SK-N-SH (cell line): ENCODE measurements at regions of chr2 and their contacts with region 1.

Region 1: DNA sequence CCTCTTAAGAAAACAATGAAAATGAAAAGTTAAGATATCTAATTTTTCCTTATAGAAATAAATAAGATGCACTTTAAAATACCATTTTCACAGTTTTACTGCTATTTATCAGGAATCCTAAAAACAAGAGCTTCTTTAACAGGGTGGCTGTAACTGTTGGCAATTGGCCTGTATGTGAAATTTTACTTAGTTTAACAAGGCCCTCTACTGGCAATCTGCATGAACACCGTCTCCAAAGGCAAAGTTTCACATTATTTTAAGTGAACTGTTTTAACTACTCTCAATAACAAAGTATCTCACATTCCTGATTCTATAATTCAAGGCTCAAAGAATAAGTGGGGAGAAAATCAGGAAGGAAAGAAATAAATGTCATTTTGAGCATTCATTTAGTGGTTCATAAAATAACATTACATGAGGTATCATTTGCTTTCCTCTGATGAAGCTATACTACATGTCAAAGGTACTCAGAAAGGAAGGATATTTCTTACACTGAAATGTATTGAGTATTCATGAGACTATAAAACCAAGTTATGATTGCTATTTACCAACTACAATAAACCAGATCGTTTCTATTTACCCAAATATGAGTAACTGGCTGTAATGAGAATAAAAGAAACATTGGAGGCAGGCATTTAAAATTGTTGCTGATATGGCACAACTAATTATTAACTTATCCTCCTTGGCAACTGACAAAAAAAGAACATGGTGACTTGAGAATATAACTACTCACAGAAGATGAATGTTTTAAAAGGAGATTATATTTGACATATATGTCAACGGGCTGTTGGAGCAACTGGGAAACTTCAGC is 7.0 kb downstream of the NCKAP5 start:
- DNase-seq: peak; percentile 41
- H3K4me3 ChIP-seq: no peak overlapping the region; a peak in 1 of 4 replicates
- H3K27ac ChIP-seq: no peak overlapping the region
- H3K4me1 ChIP-seq: peaks cover 0 to 13% of the 10 kb centered on the region in 2 experiments; a peak in 1 of 4 replicates
- H3K27me3 ChIP-seq: no peaks in the 10 kb centered on the region
- CTCF ChIP-seq: peak; percentile 83
- EP300 ChIP-seq: no peak
- RAD21 ChIP-seq: peak; percentile 88

Region 2: DNA sequence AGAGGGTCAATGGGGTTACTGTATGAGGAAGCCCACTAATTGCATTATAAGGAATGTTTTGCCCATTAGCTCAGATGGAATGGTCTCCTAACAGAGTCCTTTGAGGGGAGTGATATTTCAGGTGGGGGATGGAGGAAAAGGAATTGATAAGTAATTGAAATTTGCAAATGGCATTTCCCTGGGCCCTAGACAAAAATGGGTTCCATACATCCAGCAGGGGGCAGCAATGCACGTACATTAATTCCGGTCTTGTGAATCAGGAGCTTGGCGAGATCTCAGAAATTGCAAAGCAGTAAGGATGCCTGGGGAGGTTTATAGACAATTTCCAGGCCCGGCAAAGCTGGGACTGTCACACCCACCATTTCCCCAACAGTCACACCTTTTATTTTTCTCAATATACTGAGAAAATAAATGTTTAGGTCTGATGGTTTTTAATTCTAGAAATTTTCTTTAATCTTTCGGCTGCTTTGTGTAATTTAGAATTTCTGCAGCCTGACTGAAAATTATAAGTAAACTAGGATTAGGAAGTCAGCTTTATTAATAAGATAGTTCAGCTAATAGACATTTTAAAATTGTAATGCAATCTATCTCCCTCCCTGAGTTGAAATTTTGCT is 1014.1 kb before region 1 on chr2:
- CTCF ChIA-PET with region 1: interaction called, 31 read pairs
- POLR2A ChIA-PET with region 1: no interaction called
- DNase-seq: peak; percentile 64
- H3K4me3 ChIP-seq: peak overlapping the region in 1 of 2 experiments; percentile 6; a peak in 1 of 4 replicates
- H3K27ac ChIP-seq: no peak overlapping the region
- H3K4me1 ChIP-seq: peaks cover 0 to 7% of the 10 kb centered on the region in 2 experiments; a peak in 2 of 4 replicates
- H3K27me3 ChIP-seq: no peaks in the 10 kb centered on the region
- CTCF ChIP-seq: peak; percentile 79
- EP300 ChIP-seq: no peak
- RAD21 ChIP-seq: peak; percentile 87

Region 3: GRCh38 chr2:133262888-133263287 is 298.4 kb before region 1 on chr2:
- CTCF ChIA-PET with region 1: interaction called, 14 read pairs
- POLR2A ChIA-PET with region 1: no interaction called
- DNase-seq: no peak
- H3K4me3 ChIP-seq: no peak overlapping the region
- H3K27ac ChIP-seq: no peak overlapping the region
- H3K4me1 ChIP-seq: peaks cover 0 to 14% of the 10 kb centered on the region in 2 experiments; a peak in 2 of 4 replicates
- H3K27me3 ChIP-seq: no peaks in the 10 kb centered on the region
- CTCF ChIP-seq: peak; percentile 48
- EP300 ChIP-seq: no peak
- RAD21 ChIP-seq: peak; percentile 65

Region 4: GRCh38 chr2:133421516-133422312 is 139.5 kb before region 1 on chr2:
- CTCF ChIA-PET with region 1: interaction called, 11 read pairs
- POLR2A ChIA-PET with region 1: no interaction called
- DNase-seq: peak; percentile 8
- H3K4me3 ChIP-seq: no peak overlapping the region
- H3K27ac ChIP-seq: no peak overlapping the region
- H3K4me1 ChIP-seq: peaks cover 3 to 8% of the 10 kb centered on the region in 2 experiments; a peak in 3 of 4 replicates
- H3K27me3 ChIP-seq: no peaks in the 10 kb centered on the region
- CTCF ChIP-seq: 0 out of 2 replicates have a peak, but pooled peaks have one; percentile 15
- EP300 ChIP-seq: no peak
- RAD21 ChIP-seq: peak; percentile 44

Region 5: GRCh38 chr2:133521146-133521745 is 40.0 kb before region 1 on chr2:
- CTCF ChIA-PET with region 1: interaction called, 11 read pairs
- POLR2A ChIA-PET with region 1: no interaction called
- DNase-seq: no peak
- H3K4me3 ChIP-seq: no peak overlapping the region
- H3K27ac ChIP-seq: no peak overlapping the region
- H3K4me1 ChIP-seq: peaks cover 0 to 28% of the 10 kb centered on the region in 2 experiments; a peak in 1 of 4 replicates
- H3K27me3 ChIP-seq: no peaks in the 10 kb centered on the region
- CTCF ChIP-seq: no peak
- EP300 ChIP-seq: no peak
- RAD21 ChIP-seq: no peak

Region 6: DNA sequence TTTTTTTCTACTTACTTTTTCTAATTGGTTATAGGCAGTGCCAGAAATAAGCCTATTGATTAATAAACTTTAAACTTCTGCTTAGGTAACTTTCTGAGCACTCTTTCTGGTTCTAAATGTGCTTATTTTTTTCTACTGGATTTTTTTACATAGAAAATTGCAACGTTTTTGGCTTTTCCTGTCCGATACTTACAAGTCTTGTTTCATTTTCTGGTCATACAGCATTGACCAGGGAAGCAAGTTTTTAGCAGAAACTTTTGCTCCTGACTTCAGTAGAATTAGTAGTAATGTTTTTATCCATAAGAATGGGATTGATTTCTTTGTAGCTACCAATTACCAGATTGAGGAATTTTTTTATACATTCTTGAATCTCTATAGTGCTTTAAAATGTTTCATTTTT is 29.9 kb before region 1 on chr2:
- CTCF ChIA-PET with region 1: interaction called, 11 read pairs
- POLR2A ChIA-PET with region 1: no interaction called
- DNase-seq: no peak
- H3K4me3 ChIP-seq: no peak overlapping the region
- H3K27ac ChIP-seq: no peak overlapping the region
- H3K4me1 ChIP-seq: peaks cover 0 to 18% of the 10 kb centered on the region in 2 experiments; a peak in 1 of 4 replicates
- H3K27me3 ChIP-seq: no peaks in the 10 kb centered on the region
- CTCF ChIP-seq: no peak
- EP300 ChIP-seq: no peak
- RAD21 ChIP-seq: no peak

Region 7: DNA sequence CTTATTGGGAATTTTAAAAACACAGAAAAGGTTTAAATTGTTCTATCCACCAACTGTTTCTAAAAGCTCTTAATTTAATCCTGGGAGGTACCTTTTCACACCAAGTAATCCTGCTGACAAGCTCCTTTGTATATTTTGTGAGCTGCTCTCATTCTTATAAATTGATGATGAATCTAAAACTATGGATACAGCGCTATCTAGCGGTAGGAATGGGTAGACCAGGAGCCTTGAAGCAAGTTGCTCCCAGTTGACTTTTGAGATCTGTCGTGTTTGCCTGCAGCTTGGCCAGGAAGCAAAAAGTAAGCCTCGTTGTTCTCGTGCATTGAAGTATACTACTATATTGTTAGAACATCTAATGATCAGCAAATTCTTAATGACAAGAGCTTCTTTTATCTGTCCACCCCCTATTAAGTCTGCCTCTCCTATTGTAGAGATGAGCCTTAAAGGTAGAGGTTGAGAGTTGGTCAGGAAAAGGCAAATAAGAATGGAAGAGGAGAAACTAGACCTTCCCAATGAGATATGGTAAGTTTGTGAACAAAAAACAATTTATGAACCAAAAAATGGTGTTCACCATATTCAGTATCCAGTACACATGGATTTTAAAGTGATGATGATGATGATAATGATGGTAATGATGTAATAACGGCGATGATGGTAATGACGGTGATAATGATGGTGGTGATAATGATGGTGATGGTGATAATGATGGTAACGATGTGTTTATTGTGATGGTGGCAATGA is 219.0 kb after region 1 on chr2:
- CTCF ChIA-PET with region 1: interaction called, 22 read pairs
- POLR2A ChIA-PET with region 1: no interaction called
- DNase-seq: peak; percentile 48
- H3K4me3 ChIP-seq: no peak overlapping the region
- H3K27ac ChIP-seq: no peak overlapping the region
- H3K4me1 ChIP-seq: peaks cover 0 to 13% of the 10 kb centered on the region in 2 experiments; a peak in 2 of 4 replicates
- H3K27me3 ChIP-seq: no peaks in the 10 kb centered on the region
- CTCF ChIP-seq: peak; percentile 91
- EP300 ChIP-seq: no peak
- RAD21 ChIP-seq: peak; percentile 93